ENCODE measurements at regions of chr3 and their contacts with region 1.

Region 1: DNA sequence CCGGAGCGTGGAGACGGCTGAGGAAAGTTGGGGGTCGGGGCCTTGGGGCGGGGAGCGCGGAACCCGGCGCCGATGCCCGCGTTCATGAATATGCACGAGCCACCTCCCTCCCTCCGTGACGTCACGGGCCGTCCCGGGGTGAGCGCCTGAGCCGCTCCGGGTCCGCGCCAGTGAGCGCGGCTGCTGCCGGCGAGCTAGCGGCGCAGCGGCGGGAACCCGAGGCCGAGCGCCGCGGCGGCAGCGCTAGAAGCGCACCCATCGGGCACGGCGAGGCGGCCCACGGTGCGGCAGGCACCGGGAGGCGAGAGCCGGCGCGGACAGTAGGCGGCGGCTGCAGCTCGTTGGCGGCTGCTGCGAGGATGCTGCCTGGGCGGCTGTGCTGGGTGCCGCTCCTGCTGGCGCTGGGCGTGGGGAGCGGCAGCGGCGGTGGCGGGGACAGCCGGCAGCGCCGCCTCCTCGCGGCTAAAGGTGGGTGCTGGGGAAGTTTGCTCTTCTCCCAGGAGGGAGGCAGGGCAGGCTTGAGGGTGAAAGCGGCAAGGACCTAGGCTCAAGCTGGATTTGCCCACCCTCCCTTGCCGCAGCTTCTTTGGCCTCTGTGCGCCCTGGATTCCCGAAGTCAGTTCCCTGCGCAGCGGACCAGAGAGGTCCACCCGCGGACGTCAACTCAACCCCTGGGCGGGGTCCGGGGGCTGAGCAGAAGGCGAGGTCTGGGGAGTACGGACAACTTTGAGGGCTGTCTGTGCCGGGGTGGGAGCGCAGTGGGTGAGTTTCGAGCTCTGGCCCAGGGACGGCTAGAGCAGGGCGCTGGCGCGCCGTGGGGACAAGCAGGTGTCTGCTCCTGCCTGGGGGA is at the start of gene CLSTN2:
- DNase-seq: peak; percentile 91
- ATAC-seq: peak; percentile 91
- total RNA-seq, gene CLSTN2: 8.4 TPM

Region 2: GRCh38 chr3:139588450-139588849 is 346.8 kb before region 1 on chr3:
- intact Hi-C with region 1: loop called (anchors 10 kb)
- DNase-seq: no peak
- ATAC-seq: peak; percentile 56

Region 3: GRCh38 chr3:139718415-139718814 is 216.8 kb before region 1 on chr3:
- intact Hi-C with region 1: loop called (anchors 2 kb)
- DNase-seq: no peak
- ATAC-seq: peak; percentile 46

Region 4: DNA sequence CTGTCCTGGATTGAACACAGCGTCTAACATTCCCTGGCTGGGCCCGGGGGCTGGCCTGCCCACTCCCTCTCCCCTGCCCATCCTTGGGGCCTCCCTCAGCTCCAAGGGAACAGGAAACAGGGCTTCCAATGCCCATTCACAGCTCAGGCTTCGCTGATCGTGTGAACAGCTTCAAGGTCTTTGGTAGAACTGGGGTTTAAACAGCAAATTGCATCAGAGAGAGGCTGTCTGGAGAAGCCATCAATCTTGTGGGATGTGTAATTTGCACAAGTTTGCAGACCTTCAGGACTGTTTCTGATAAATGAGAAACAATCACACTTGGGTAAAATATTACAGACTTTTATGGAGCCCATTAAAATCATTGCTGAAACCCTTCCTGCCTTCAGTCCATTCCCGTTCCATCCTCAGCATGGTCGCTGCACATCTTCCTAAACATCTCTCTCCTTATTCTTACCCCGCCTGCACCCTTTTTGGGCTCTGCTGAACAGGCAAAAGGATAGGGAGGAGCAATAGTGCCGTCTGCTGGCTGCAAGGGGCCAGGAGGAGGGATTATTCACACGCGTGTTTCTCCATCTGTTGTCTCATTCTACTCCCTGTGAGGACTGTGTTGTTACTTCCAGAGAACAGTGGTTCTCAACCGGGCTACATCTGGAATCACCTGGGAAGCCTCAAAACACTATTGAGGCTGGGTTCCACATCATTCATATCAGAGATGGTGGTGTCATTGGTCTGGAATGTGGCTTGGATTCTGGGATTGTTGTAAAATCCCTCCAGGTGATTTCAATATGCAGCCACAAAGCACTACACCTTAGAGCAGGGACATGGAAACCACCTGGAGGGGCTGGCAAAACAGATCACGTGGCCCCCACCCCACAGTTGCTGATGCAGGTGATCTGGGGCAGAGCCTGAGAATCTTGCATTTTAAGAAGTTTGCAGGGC is 116.0 kb after region 1 on chr3:
- intact Hi-C with region 1: loop called (anchors 2 kb)
- DNase-seq: no peak
- ATAC-seq: no peak

Region 5: DNA sequence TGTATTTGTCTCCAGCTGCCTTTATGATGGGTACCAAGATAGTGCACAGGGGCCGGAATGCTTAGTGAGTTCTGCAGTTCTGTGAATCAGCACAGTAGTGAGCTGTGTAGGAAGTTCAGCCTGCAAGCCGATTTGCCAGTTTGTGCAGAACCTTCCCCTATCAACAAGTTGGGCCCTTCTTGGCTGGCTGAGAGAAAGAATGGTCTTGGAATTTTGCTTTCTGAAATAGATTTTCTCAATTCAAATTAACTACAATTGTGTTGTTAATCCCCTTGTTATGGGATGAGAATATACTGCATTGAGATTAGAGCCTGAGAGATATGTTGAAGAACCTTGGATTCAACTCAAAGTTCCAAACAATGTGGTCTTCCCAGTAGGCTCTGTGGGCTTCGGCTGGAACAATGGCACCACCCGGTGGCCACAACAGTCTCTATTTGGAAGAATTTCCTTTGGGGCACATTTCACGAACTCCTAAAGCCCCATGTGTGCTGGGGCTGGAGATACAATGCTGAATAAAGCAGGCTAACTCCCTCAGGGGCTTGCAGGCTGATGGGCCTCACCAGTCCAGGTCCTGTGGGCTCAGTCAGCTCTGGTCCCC is 801.7 kb after region 1 on chr3:
- intact Hi-C with region 1: loop called (anchors 2 kb)
- DNase-seq: no peak
- ATAC-seq: peak; percentile 78

Region 6: DNA sequence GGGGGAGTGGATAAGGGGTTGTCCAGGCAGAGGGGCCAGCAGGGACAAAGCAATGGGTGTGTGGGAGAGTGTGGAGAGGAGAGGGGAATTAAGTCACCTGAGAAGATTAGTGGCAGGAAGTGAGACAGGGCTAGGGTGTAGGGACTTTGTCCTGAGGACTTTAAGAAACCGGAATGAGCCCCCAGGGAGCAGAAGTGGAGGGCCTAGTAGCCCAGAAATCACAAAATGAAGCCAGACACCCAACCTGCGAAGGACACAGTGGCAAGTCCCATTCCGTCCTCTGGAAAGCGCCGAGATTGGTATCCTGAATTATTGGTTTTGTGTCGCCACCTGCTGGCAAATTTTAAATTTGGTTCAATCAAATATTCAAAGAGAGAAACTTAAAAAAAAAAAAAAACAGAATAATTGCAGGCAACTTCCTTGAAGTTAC is 928.4 kb after region 1 on chr3:
- intact Hi-C with region 1: loop called (anchors 10 kb)
- DNase-seq: no peak
- ATAC-seq: no peak

Measured in Right ventricle myocardium inferior (tissue), 1 donor.